ENCODE measurements at regions of chr14 and their contacts with region 1.

Region 1: GRCh38 chr14:49828640-49829039 is 23.9 kb downstream of the NEMF start:
- DNase-seq: no peak
- ATAC-seq: no peak
- H3K4me3 Mint-ChIP-seq: no peak overlapping the region
- H3K27ac Mint-ChIP-seq: no peak overlapping the region
- H3K4me1 Mint-ChIP-seq: peaks cover 6% of the 10 kb centered on the region
- H3K27me3 Mint-ChIP-seq: no peaks in the 10 kb centered on the region

Region 2: DNA sequence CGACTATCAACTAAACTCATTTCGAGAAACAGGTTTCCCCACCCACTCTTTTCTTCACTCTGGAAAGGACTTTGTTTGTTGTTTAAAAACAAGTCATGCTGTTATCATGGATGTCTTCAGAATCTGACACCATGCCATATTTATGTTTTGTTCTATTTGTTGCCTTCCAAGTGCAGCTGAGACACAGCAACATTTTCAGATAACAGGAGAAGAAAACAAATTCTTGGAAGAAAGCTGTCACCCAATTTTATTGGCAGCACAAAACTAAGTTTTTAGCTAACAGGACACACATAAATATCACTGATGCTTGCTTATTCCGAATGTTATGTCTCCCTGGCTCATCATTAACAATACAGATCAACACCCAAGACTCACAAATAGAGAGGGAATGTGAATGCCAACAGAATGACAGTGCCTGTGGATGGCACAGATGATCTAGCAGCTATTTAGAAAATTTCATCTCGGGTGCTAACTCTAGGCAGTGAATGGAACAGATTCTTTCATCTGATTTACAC is 390.3 kb before region 1 on chr14:
- CTCF ChIA-PET with region 1: no interaction called
- DNase-seq: no peak
- ATAC-seq: no peak
- H3K4me3 Mint-ChIP-seq: no peak overlapping the region
- H3K27ac Mint-ChIP-seq: no peak overlapping the region
- H3K4me1 Mint-ChIP-seq: no peaks in the 10 kb centered on the region
- H3K27me3 Mint-ChIP-seq: peaks cover 6% of the 10 kb centered on the region

Region 3: GRCh38 chr14:49808780-49809179 is 19.9 kb before region 1 on chr14:
- CTCF ChIA-PET with region 1: interaction called, 10 read pairs
- DNase-seq: no peak
- ATAC-seq: no peak
- H3K4me3 Mint-ChIP-seq: no peak overlapping the region
- H3K27ac Mint-ChIP-seq: peak overlapping the region; percentile 11
- H3K4me1 Mint-ChIP-seq: peaks cover 2% of the 10 kb centered on the region
- H3K27me3 Mint-ChIP-seq: no peaks in the 10 kb centered on the region

Region 4: GRCh38 chr14:49940808-49941421 is 112.3 kb after region 1 on chr14:
- CTCF ChIA-PET with region 1: no interaction called
- DNase-seq: peak; percentile 44
- ATAC-seq: peak; percentile 58
- H3K4me3 Mint-ChIP-seq: no peak overlapping the region
- H3K27ac Mint-ChIP-seq: peak overlapping the region; percentile 78
- H3K4me1 Mint-ChIP-seq: peaks cover 54% of the 10 kb centered on the region
- H3K27me3 Mint-ChIP-seq: no peaks in the 10 kb centered on the region

Region 5: GRCh38 chr14:50023671-50024490 is 195.2 kb after region 1 on chr14:
- CTCF ChIA-PET with region 1: no interaction called
- DNase-seq: no peak
- ATAC-seq: no peak
- H3K4me3 Mint-ChIP-seq: no peak overlapping the region
- H3K27ac Mint-ChIP-seq: no peak overlapping the region
- H3K4me1 Mint-ChIP-seq: peaks cover 31% of the 10 kb centered on the region
- H3K27me3 Mint-ChIP-seq: no peaks in the 10 kb centered on the region

Region 6: DNA sequence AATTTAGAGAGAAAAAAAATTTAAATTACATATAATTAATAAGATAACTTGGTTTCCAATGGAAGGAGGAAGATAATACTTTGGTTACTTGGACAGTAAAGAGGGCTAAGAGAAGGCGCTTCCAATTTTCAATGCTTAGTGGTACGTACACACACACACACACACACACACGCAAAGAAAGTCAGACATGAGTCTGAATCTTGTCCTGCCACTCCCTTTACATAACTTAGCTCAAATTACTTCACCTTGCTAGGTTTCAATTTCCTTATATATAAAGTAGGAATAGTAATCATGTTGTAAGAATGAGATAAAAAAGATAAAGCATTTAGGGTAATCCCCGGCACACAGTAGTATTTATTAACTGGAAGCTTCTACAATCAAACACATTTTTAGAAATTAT is 327.5 kb after region 1 on chr14:
- CTCF ChIA-PET with region 1: no interaction called
- DNase-seq: no peak
- ATAC-seq: no peak
- H3K4me3 Mint-ChIP-seq: no peak overlapping the region
- H3K27ac Mint-ChIP-seq: no peak overlapping the region
- H3K4me1 Mint-ChIP-seq: no peaks in the 10 kb centered on the region
- H3K27me3 Mint-ChIP-seq: no peaks in the 10 kb centered on the region